Activated B cell treated with CpG ODN at 0.5 μM for 24 hours (primary cell): ENCODE measurements at regions of chr13 and their contacts with region 1.

Region 1: DNA sequence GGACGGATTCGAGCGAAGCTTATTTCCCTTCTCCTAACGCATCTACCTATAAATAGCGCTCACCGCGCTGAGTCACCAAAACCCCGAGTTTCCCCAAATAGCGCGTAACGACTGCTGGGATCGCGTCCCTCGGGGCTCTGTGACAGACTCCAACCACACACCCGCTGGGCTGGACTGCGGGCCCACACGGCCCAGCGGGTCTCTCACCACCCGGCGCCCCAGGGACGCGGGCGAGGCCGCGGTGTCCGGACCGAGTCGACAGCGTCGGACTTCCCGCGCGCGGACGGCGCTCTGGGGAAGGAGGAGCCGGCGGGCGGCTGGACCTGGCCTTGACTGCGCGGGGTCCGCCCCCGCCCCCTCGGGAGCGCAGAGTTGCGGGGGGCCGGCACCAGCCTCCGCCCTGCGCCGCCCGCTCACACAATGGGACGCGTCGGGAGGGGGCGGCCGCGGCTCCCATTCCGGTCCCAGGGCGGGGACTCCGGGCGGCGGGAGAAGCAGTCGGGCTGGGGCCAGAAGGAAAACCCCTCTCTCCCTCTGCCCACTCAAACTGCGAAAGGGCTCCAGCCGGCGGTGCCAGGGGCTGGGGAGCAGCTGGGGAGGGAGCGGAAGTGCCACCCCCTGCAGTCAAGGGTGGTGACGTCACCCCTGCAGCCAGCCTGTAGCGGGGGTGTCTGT is 108.8 kb downstream of the KCNRG start:
- DNase-seq: peak; percentile 86
- ATAC-seq: peak; percentile 59
- H3K4me3 Mint-ChIP-seq: peak overlapping the region; percentile 87
- H3K27ac Mint-ChIP-seq: peak overlapping the region; percentile 95
- H3K4me1 Mint-ChIP-seq: peaks cover 64% of the 10 kb centered on the region
- H3K27me3 Mint-ChIP-seq: peaks cover 2% of the 10 kb centered on the region
- CTCF ChIP-seq: no peak

Region 2: GRCh38 chr13:48667167-48667566 is 1456.8 kb before region 1 on chr13:
- CTCF ChIA-PET with region 1: no interaction called
- POLR2A ChIA-PET with region 1: no interaction called
- intact Hi-C with region 1: no loop called
- DNase-seq: no peak
- ATAC-seq: no peak
- H3K4me3 Mint-ChIP-seq: no peak overlapping the region
- H3K27ac Mint-ChIP-seq: no peak overlapping the region
- H3K4me1 Mint-ChIP-seq: no peaks in the 10 kb centered on the region
- H3K27me3 Mint-ChIP-seq: peaks cover 4% of the 10 kb centered on the region
- CTCF ChIP-seq: no peak

Region 3: DNA sequence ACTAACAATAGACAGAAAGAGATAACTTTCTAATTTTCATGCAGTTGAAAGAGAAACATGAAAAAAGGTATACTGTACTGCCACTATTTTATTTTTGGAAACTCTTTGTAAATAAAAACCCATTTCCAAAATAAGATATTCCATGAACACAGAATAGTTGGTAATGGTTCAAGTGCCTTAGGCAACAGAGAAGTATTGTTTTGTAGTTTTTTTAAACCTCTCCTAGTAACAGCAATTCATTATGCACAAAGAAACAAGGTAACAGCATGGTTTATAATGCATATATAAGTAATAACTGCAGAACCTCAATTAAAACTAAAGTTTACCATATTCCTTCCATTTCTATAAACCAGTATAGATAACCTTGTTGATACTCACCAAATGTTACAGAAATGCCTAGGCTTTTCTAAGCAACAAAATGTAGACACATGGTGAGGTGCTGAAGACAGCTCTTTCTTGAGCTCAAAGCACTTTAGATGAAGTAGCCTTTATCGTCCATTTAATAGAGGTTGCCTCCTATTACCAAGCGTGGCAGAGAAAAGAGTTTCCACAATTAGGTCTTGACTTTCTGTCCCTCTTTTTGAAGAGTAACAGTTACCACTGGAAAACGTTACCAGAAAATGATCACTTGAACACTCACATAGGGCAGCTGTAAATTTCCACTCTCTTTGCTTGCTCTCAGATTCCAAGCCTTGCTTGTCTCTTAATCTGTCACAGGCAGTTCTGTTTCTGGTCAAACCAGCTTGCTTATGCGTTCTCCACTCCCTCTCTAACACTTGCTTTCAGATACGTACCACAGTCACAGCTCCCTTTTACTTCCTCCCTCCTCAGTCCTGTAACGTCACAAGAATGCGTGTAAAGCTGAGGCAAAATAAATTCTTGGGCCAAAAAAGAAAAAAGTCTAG is 723.0 kb before region 1 on chr13:
- CTCF ChIA-PET with region 1: no interaction called
- POLR2A ChIA-PET with region 1: no interaction called
- intact Hi-C with region 1: no loop called
- DNase-seq: no peak
- ATAC-seq: peak; percentile 76
- H3K4me3 Mint-ChIP-seq: peak overlapping the region; percentile 56
- H3K27ac Mint-ChIP-seq: no peak overlapping the region
- H3K4me1 Mint-ChIP-seq: peaks cover 8% of the 10 kb centered on the region
- H3K27me3 Mint-ChIP-seq: no peaks in the 10 kb centered on the region
- CTCF ChIP-seq: no peak

Region 4: GRCh38 chr13:49976314-49977258 is 147.4 kb before region 1 on chr13:
- CTCF ChIA-PET with region 1: no interaction called
- POLR2A ChIA-PET with region 1: interaction called, 16 read pairs
- intact Hi-C with region 1: loop called (anchors 5 kb)
- DNase-seq: peak; percentile 57
- ATAC-seq: peak; percentile 86
- H3K4me3 Mint-ChIP-seq: no peak overlapping the region
- H3K27ac Mint-ChIP-seq: no peak overlapping the region
- H3K4me1 Mint-ChIP-seq: peaks cover 2% of the 10 kb centered on the region
- H3K27me3 Mint-ChIP-seq: no peaks in the 10 kb centered on the region
- CTCF ChIP-seq: no peak

Region 5: GRCh38 chr13:50152655-50153309 is 28.8 kb after region 1 on chr13:
- CTCF ChIA-PET with region 1: no interaction called
- POLR2A ChIA-PET with region 1: interaction called, 34 read pairs
- intact Hi-C with region 1: no loop called
- DNase-seq: no peak
- ATAC-seq: peak; percentile 70
- H3K4me3 Mint-ChIP-seq: peak overlapping the region; percentile 76
- H3K27ac Mint-ChIP-seq: peak overlapping the region; percentile 75
- H3K4me1 Mint-ChIP-seq: peaks cover 30% of the 10 kb centered on the region
- H3K27me3 Mint-ChIP-seq: no peaks in the 10 kb centered on the region
- CTCF ChIP-seq: no peak

Region 6: GRCh38 chr13:50244713-50245574 is 120.9 kb after region 1 on chr13:
- CTCF ChIA-PET with region 1: interaction called, 4 read pairs
- POLR2A ChIA-PET with region 1: interaction called, 136 read pairs
- intact Hi-C with region 1: no loop called
- DNase-seq: no peak
- ATAC-seq: peak; percentile 92
- H3K4me3 Mint-ChIP-seq: peak overlapping the region; percentile 2
- H3K27ac Mint-ChIP-seq: peak overlapping the region; percentile 91
- H3K4me1 Mint-ChIP-seq: peaks cover 40% of the 10 kb centered on the region
- H3K27me3 Mint-ChIP-seq: no peaks in the 10 kb centered on the region
- CTCF ChIP-seq: no peak

Region 7: GRCh38 chr13:50531917-50532899 is 408.2 kb after region 1 on chr13:
- CTCF ChIA-PET with region 1: interaction called, 4 read pairs
- POLR2A ChIA-PET with region 1: interaction called, 8 read pairs
- intact Hi-C with region 1: loop called (anchors 5 kb)
- DNase-seq: no peak
- ATAC-seq: no peak
- H3K4me3 Mint-ChIP-seq: no peak overlapping the region
- H3K27ac Mint-ChIP-seq: no peak overlapping the region
- H3K4me1 Mint-ChIP-seq: peaks cover 15% of the 10 kb centered on the region
- H3K27me3 Mint-ChIP-seq: no peaks in the 10 kb centered on the region
- CTCF ChIP-seq: no peak

Region 8: GRCh38 chr13:50810998-50811397 is 687.0 kb after region 1 on chr13:
- CTCF ChIA-PET with region 1: no interaction called
- POLR2A ChIA-PET with region 1: interaction called, 28 read pairs
- intact Hi-C with region 1: no loop called
- DNase-seq: no peak
- ATAC-seq: peak; percentile 93
- H3K4me3 Mint-ChIP-seq: peak overlapping the region; percentile 65
- H3K27ac Mint-ChIP-seq: peak overlapping the region; percentile 84
- H3K4me1 Mint-ChIP-seq: peaks cover 43% of the 10 kb centered on the region
- H3K27me3 Mint-ChIP-seq: no peaks in the 10 kb centered on the region
- CTCF ChIP-seq: no peak